ENCODE measurements at regions of chr9 and their contacts with region 1.

Region 1: GRCh38 chr9:22008736-22009562 is at the start of gene CDKN2B:
- DNase-seq: peak; percentile 88 to 92 (median 89)
- H3K4me3 ChIP-seq: peak within 1 kb of the TSS; percentile 78 to 99 (median 97)
- H3K4me3 Mint-ChIP-seq: peak within 1 kb of the TSS; percentile 95 to 96
- H3K27ac ChIP-seq: peak within 1 kb of the TSS; percentile 68 to 81
- H3K27ac Mint-ChIP-seq: peak within 1 kb of the TSS; percentile 72 to 97 (median 94)
- H3K4me1 ChIP-seq: peaks cover 22 to 35% of the 10 kb centered on the region in 2 donors
- H3K4me1 Mint-ChIP-seq: peaks cover 38% of the 10 kb centered on the region
- H3K27me3 ChIP-seq: peaks cover 66 to 88% of the 10 kb centered on the region in 2 donors
- H3K27me3 Mint-ChIP-seq: peaks cover 60 to 82% (median 71%) of the 10 kb centered on the region in 3 donors
- CTCF ChIP-seq: peak; percentile 99
- polyA plus RNA-seq, gene CDKN2B: 1.2 to 6.7 (median 2.7) TPM

Region 2: DNA sequence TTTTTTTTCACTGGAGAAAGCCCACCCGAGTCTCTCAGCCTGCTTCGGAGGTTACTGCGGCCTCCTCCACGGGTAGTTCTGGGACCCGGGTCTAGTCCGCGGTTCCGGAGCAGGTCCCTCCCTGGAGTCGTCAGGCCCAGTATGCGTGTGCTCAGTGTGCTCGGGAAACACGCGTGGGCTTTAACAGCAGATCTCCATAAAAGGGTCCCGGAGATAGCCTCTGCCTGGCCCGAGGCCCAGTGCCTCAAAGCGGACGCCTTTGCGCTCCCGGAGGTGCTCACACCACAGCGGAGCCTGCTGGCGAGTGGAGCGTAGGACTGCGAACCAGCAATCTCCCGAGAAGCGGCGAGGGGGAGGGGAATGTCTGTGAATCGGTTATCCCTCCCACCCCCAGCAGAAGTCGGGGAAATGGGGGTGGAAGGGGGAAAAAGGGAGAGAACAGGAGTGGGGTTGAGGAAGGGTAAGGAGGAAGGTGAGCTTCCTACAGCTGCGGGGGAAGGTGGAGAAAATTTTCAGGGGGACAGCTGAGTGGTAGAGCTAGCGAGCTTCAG is 43.5 kb before region 1 on chr9:
- intact Hi-C with region 1: loop called (anchors 5 kb)
- DNase-seq: peak in 2 of 3 donors; percentile 40 to 70
- H3K4me3 ChIP-seq: peak overlapping the region; percentile 5 to 72 (median 29)
- H3K4me3 Mint-ChIP-seq: peak overlapping the region; percentile 71 to 90
- H3K27ac ChIP-seq: no peak overlapping the region
- H3K27ac Mint-ChIP-seq: peak overlapping the region in 4 of 7 donors; percentile 46 to 82 (median 52)
- H3K4me1 ChIP-seq: peaks cover 28 to 33% of the 10 kb centered on the region in 2 donors
- H3K4me1 Mint-ChIP-seq: peaks cover 49% of the 10 kb centered on the region
- H3K27me3 ChIP-seq: peaks cover 80 to 100% of the 10 kb centered on the region in 2 donors
- H3K27me3 Mint-ChIP-seq: peaks cover 81 to 92% (median 84%) of the 10 kb centered on the region in 3 donors
- CTCF ChIP-seq: peak; percentile 32

Region 3: GRCh38 chr9:21995177-21996086 is 13.5 kb before region 1 on chr9:
- intact Hi-C with region 1: loop called in 1 of 2 experiments (anchors 1 kb)
- DNase-seq: peak; percentile 89 to 93 (median 91)
- H3K4me3 ChIP-seq: peak overlapping the region; percentile 56 to 94 (median 73)
- H3K4me3 Mint-ChIP-seq: peak overlapping the region; percentile 95 to 98
- H3K27ac ChIP-seq: peak overlapping the region; percentile 76 to 97
- H3K27ac Mint-ChIP-seq: peak overlapping the region; percentile 91 to 97 (median 95)
- H3K4me1 ChIP-seq: peaks cover 19 to 28% of the 10 kb centered on the region in 2 donors
- H3K4me1 Mint-ChIP-seq: peaks cover 23% of the 10 kb centered on the region
- H3K27me3 ChIP-seq: peaks cover 44 to 78% of the 10 kb centered on the region in 2 donors
- H3K27me3 Mint-ChIP-seq: peaks cover 51 to 66% (median 57%) of the 10 kb centered on the region in 3 donors
- CTCF ChIP-seq: peak; percentile 26

Measured in CD14-positive monocyte (primary cell).